Activated CD4-positive, alpha-beta memory T cell treated with anti-CD3 and anti-CD28 coated beads, Interleukin-2, amount 10 ng/mL, durations not matched to agents 7 days and 5 days (primary cell): ENCODE measurements at regions of chr22 and their contacts with region 1.

Region 1: DNA sequence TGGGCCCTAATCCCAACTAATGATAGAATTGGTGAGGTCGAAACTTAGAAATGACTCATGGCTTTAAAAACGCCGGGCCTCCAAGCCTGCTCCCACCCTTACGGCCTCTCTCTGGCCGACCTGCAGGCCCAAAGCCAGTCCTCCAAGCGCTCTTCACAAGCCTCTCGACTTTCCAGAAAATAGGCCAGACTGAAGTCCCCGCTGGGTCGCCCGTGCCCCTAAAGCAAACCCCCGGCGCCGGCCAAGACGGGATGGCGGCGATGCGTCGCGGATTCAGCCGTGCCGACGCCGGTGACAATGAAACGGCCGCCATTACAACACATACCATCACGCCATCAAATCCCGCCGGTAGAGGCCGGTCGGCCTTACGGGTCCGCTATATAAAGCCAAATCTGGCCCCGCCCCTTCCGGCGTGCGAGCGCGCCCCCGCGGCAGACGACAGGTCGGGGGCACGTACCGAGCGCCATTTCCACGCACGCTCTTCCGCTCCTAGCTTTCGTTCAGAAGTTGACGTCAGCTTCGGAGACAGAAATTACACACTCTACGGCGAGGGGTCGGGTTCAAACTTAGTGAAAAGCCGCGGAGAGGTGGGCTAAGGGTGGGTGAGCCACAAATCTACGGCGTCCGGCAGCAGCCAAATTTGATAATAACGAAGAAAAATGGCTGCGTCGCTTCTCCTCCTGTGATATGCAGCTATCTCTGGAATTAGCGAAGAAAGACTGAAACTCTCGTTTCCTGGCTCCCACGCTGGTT is at the start of gene RPL3:
- DNase-seq: peak; percentile 96
- H3K4me3 Mint-ChIP-seq: peak within 1 kb of the TSS; percentile 95
- H3K27ac Mint-ChIP-seq: peak within 1 kb of the TSS; percentile 96
- H3K4me1 Mint-ChIP-seq: peaks cover 45% of the 10 kb centered on the region
- H3K27me3 Mint-ChIP-seq: no peaks in the 10 kb centered on the region
- total RNA-seq, gene RPL3: 1,526 to 1,529 TPM

Region 2: GRCh38 chr22:39152511-39153219 is 166.8 kb before region 1 on chr22 and contains the start of gene CBX7:
- CTCF ChIA-PET with region 1: interaction called, 11 read pairs
- POLR2A ChIA-PET with region 1: interaction called, 61 read pairs
- DNase-seq: peak; percentile 97
- H3K4me3 Mint-ChIP-seq: peak within 1 kb of the TSS; percentile 78
- H3K27ac Mint-ChIP-seq: peak within 1 kb of the TSS; percentile 58
- H3K4me1 Mint-ChIP-seq: peaks cover 46% of the 10 kb centered on the region
- H3K27me3 Mint-ChIP-seq: peaks cover 30% of the 10 kb centered on the region
- total RNA-seq, gene CBX7: 24.9 to 25.0 TPM

Region 3: GRCh38 chr22:39240828-39241793 is 78.3 kb before region 1 on chr22:
- CTCF ChIA-PET with region 1: no interaction called
- POLR2A ChIA-PET with region 1: interaction called, 29 read pairs
- DNase-seq: peak; percentile 69
- H3K4me3 Mint-ChIP-seq: peak overlapping the region; percentile 74
- H3K27ac Mint-ChIP-seq: peak overlapping the region; percentile 82
- H3K4me1 Mint-ChIP-seq: peaks cover 61% of the 10 kb centered on the region
- H3K27me3 Mint-ChIP-seq: peaks cover 61% of the 10 kb centered on the region

Region 4: GRCh38 chr22:39388261-39389011 is 69.0 kb after region 1 on chr22:
- CTCF ChIA-PET with region 1: no interaction called
- POLR2A ChIA-PET with region 1: interaction called, 11 read pairs
- DNase-seq: peak; percentile 93
- H3K4me3 Mint-ChIP-seq: peak overlapping the region; percentile 76
- H3K27ac Mint-ChIP-seq: peak overlapping the region; percentile 76
- H3K4me1 Mint-ChIP-seq: peaks cover 17% of the 10 kb centered on the region
- H3K27me3 Mint-ChIP-seq: no peaks in the 10 kb centered on the region

Region 5: DNA sequence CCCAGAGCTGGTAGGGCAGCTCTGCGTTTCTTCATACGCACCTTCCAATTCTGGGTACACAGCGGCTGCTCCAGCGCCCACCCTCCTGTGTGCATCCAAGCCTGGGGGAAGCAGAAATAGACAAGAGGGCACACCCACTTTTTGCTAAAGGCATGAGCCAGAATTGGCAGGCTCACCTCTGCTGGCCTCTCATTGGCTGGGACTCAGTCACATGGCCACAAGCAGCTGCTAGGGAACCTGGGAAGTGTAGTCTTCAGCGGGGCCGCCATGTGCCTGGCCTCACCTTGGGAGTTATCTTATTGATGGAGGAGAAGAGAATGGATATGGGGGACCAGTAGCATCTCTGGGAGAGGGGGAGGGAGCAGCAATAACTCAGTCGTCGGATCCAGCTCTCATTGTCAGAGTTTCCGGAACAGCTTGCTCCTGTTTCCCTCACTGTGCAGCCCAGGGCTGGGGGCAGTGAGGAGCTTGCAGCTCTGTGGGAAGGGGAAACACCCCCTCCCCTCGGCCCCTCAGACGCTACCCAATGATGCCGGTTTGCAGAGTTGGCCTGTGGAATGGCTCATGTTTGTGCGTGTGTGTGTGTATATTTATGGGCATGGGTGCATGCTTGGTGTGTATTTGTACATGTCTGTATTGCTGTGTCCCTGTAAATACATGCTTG is 170.8 kb after region 1 on chr22:
- CTCF ChIA-PET with region 1: no interaction called
- POLR2A ChIA-PET with region 1: interaction called, 12 read pairs
- DNase-seq: peak; percentile 82
- H3K4me3 Mint-ChIP-seq: no peak overlapping the region
- H3K27ac Mint-ChIP-seq: no peak overlapping the region
- H3K4me1 Mint-ChIP-seq: peaks cover 14% of the 10 kb centered on the region
- H3K27me3 Mint-ChIP-seq: peaks cover 2% of the 10 kb centered on the region

Region 6: GRCh38 chr22:39598017-39598965 is 278.8 kb after region 1 on chr22:
- CTCF ChIA-PET with region 1: no interaction called
- POLR2A ChIA-PET with region 1: no interaction called
- DNase-seq: peak; percentile 74
- H3K4me3 Mint-ChIP-seq: no peak overlapping the region
- H3K27ac Mint-ChIP-seq: no peak overlapping the region
- H3K4me1 Mint-ChIP-seq: peaks cover 30% of the 10 kb centered on the region
- H3K27me3 Mint-ChIP-seq: peaks cover 31% of the 10 kb centered on the region